CD4-positive, alpha-beta memory T cell (primary cell): ENCODE measurements at regions of chr10 and their contacts with region 1.

Region 1: DNA sequence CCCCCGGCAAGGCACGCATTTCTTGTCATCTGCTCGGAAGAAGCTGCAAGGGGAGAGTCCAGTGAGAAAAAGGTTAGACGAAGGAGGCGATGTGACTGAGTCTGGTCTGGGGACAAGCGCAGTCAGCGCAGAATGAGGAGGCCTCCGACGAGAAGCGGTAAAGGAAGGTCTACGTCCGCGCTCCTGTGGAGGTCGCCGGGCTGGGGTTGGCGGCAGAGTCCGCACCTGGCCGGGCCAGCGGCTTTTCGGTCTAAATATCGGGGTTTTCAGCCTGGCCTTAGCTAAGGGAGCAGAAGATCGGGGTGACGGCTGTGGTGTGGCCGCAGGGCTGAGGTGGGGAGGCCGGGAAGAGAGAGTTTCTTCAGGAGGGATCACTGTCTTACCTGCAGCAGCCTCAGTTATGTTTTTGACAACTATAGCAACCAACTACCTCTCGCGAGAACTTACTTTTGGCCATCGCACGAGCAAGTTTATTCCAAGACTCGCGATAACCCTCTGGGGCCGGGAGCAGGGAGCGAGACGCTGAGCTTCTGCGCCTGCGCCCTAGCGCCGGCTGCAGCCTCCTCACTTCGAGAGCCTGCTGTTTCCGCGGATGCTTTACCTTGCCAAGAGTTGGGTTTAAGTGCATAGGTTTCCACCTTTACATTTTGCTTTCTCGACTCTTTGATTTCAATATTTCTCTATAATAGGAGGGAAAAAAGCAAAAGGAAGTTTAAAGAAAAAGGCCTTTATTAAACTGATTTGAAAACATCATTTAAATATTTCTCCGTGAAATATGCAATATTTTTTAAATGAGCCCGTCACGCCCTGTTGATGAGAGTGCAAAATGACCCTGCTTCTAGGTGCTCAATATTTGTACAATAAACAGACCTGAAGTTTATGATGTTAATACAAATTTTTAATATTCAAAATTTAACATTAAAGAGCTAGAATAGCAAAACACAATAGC is at the start of gene CFAP70:
- DNase-seq: peak; percentile 92 to 96 (median 96)
- H3K4me3 ChIP-seq: peak within 1 kb of the TSS; percentile 38 to 60
- H3K4me3 Mint-ChIP-seq: peak within 1 kb of the TSS; percentile 94 to 98 (median 97)
- H3K27ac ChIP-seq: peak within 1 kb of the TSS; percentile 80
- H3K27ac Mint-ChIP-seq: peak within 1 kb of the TSS; percentile 91 to 99 (median 99)
- H3K4me1 ChIP-seq: peaks cover 12% of the 10 kb centered on the region
- H3K4me1 Mint-ChIP-seq: peaks cover 9 to 21% (median 17%) of the 10 kb centered on the region in 4 donors
- H3K27me3 ChIP-seq: no peaks in the 10 kb centered on the region
- H3K27me3 Mint-ChIP-seq: peaks cover 0 to 4% of the 10 kb centered on the region in 2 donors
- total RNA-seq, gene CFAP70: 3.8 to 5.6 TPM

Region 2: GRCh38 chr10:73246783-73247508 is 111.7 kb before region 1 on chr10 and contains the start of gene DNAJC9:
- CTCF ChIA-PET with region 1: no interaction called
- POLR2A ChIA-PET with region 1: interaction called, 15 read pairs
- intact Hi-C with region 1: loop called (anchors 2 kb)
- DNase-seq: peak; percentile 95 to 98 (median 96)
- H3K4me3 ChIP-seq: peak within 1 kb of the TSS; percentile 53 to 87
- H3K4me3 Mint-ChIP-seq: peak within 1 kb of the TSS; percentile 96 to 99 (median 97)
- H3K27ac ChIP-seq: peak within 1 kb of the TSS; percentile 82
- H3K27ac Mint-ChIP-seq: peak within 1 kb of the TSS; percentile 94 to 99 (median 98)
- H3K4me1 ChIP-seq: peaks cover 50% of the 10 kb centered on the region
- H3K4me1 Mint-ChIP-seq: peaks cover 35 to 74% (median 56%) of the 10 kb centered on the region in 4 donors
- H3K27me3 ChIP-seq: no peaks in the 10 kb centered on the region
- H3K27me3 Mint-ChIP-seq: no peaks in the 10 kb centered on the region
- total RNA-seq, gene DNAJC9: 31.6 to 31.7 TPM